Gastrocnemius medialis (tissue), 4 donors: ENCODE measurements at regions of chr11 and their contacts with region 1.

Region 1: DNA sequence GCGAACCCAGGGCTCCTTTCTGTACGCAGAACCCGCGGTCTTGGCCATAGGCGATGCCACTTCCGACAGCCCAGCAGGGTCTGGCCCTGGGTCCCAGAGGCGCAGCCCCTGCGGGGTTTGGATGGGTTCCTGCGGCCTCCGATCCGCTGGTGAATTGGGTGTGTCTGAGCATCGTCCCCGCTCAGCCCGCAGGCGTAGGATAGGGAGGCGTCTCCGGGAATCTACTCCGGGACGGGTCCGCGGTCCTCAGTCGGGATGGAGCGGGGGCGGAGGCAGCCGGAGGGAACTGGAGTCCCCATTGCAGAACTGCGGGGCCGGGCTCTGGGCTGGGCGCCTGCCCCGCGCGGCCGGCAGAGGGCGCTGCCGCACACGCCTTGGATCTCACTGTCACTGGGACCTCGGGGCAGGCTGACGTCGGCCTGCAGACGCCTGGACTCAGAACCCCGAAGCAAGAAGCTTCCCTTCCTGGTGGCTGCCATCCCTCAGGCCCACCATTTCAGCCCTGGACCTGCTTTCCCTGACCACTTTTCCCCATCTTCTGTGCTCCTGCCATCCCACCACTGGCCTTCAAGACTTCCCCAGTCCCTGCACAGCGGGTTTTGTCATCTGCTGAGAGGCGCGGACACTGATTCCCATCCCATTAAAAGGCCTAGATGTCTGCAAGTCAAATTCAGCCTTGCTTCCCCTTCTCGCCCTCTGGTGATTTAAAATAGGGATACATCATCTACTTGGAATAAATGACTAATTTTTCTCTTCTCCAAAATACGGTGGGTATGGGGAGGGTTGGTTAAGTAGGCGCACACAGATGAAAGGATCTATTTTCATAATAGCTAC is 38.3 kb upstream of the CREB3L1 start:
- DNase-seq: peak; percentile 48 to 71
- ATAC-seq: peak; percentile 69 to 73
- H3K4me3 ChIP-seq: peak overlapping the region; percentile 39 to 65 (median 56)
- H3K27ac ChIP-seq: peak overlapping the region; percentile 1 to 71 (median 68)
- H3K4me1 ChIP-seq: peaks cover 10 to 22% of the 10 kb centered on the region in 2 donors
- H3K27me3 ChIP-seq: peaks cover 0 to 18% (median 6%) of the 10 kb centered on the region in 3 donors
- CTCF ChIP-seq: peak; percentile 95 to 100 (median 99)
- POLR2A ChIP-seq: no peak

Region 2: DNA sequence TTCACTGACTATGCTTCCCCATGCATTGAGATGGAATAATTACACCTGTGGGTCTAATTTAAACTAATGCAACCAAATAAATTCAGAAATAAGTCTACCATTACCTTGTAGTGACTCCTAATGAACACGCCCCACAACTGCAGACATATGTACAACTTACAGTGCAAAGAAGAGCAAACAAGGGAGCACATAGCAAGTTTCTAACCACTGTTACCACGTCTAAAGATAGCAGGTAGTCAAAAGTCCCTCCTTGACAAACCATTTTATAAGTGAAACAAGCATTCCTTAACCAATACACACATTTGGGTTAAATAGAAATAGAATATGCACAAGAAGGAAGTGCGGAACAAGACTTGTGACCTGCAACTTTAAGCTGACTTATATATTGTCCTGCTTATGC is 138.5 kb before region 1 on chr11:
- in situ Hi-C with region 1: no loop called
- intact Hi-C with region 1: no loop called
- DNase-seq: no peak
- ATAC-seq: no peak
- H3K4me3 ChIP-seq: no peak overlapping the region
- H3K27ac ChIP-seq: no peak overlapping the region
- H3K4me1 ChIP-seq: peaks cover 50 to 60% of the 10 kb centered on the region in 2 donors
- H3K27me3 ChIP-seq: no peaks in the 10 kb centered on the region
- CTCF ChIP-seq: no peak
- POLR2A ChIP-seq: no peak

Region 3: DNA sequence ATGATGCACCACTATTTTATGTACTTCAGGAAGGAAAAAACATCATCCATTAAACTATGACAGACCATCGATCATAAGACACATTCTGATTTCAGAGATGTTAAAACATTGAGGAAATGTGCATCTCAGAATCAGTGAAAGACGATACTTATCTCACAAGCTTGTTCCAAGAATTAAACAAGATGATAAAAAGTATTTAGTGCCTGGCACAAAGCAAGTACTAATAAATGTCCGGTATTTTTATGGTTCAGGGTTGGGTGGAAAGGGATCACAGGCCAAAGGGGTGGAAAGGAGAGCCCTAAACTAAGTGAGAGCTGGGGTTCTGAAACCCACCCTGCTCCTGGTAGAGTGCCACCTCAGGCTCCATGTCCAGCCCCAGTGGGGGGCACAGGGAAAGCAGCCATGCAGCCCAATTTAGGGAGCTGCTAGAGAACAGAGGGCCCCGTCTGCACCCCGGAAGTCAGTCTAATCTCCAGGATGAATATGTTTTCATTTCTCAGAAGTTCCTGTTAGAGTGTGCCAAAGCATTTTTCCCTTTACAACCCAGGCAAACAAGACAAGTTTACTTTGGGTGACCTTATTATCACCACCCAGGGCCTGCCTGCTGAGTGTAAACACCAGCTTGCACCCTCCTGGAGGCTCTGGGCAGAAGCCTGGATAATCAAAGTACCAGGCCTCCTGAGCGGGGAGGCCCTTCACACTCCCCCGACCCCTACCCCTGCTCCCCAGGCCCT is 34.5 kb after region 1 on chr11:
- in situ Hi-C with region 1: no loop called
- intact Hi-C with region 1: loop called (anchors 2 kb)
- DNase-seq: no peak
- ATAC-seq: no peak
- H3K4me3 ChIP-seq: no peak overlapping the region
- H3K27ac ChIP-seq: peak overlapping the region; percentile 61 to 72 (median 66)
- H3K4me1 ChIP-seq: peaks cover 20 to 24% of the 10 kb centered on the region in 2 donors
- H3K27me3 ChIP-seq: peaks cover 12 to 30% (median 19%) of the 10 kb centered on the region in 3 donors
- CTCF ChIP-seq: no peak
- POLR2A ChIP-seq: no peak

Region 4: GRCh38 chr11:46295312-46296058 is 56.3 kb after region 1 on chr11:
- in situ Hi-C with region 1: no loop called
- intact Hi-C with region 1: no loop called
- DNase-seq: peak; percentile 60 to 66
- ATAC-seq: peak; percentile 75 to 85
- H3K4me3 ChIP-seq: peak overlapping the region; percentile 63 to 72 (median 64)
- H3K27ac ChIP-seq: peak overlapping the region in 1 of 4 donors; percentile 44
- H3K4me1 ChIP-seq: peaks cover 12 to 13% of the 10 kb centered on the region in 2 donors
- H3K27me3 ChIP-seq: no peaks in the 10 kb centered on the region
- CTCF ChIP-seq: no peak
- POLR2A ChIP-seq: no peak

Region 5: DNA sequence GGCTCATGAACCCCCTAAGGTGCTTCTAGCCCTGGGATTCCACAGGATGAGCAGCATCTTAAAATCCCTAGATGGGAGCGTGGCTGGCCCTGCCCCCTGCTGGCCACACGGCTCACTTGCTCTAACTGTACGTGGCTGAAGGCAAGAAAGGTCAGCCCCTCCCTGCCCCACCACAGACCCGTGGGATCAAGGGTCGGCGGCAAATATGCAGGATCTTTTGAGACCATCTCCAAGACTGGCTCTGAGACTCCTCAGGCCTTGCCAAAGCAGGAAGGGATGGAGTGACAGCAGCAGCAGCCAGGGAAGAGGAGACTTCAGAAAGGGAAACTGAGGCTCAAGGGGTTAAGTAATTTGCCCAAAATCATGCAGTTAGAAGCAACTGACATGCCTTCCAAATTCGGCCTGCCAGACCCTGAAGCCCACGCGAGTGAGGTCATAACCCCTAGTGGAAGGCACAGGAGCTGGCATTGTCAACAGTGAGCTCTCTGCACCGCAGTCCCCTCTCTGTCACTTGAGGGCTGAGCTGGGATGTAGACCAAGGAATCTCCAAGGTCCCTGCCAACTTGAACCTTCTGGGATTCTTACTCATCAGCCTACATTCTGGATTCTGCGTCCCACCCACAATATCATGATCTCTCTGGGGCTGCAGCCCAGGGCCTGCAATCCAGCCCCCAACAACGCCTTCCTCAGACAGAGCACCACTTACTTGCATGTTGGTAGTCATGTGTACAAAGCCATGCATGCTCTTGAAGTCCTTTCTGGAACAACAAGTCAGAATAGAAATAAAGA is 69.6 kb after region 1 on chr11:
- in situ Hi-C with region 1: loop called (anchors 5 kb)
- intact Hi-C with region 1: loop called (anchors 1 kb)
- DNase-seq: peak; percentile 43 to 66
- ATAC-seq: peak; percentile 80 to 81
- H3K4me3 ChIP-seq: no peak overlapping the region
- H3K27ac ChIP-seq: no peak overlapping the region
- H3K4me1 ChIP-seq: no peaks in the 10 kb centered on the region
- H3K27me3 ChIP-seq: no peaks in the 10 kb centered on the region
- CTCF ChIP-seq: peak; percentile 85 to 92 (median 90)
- POLR2A ChIP-seq: no peak

Region 6: DNA sequence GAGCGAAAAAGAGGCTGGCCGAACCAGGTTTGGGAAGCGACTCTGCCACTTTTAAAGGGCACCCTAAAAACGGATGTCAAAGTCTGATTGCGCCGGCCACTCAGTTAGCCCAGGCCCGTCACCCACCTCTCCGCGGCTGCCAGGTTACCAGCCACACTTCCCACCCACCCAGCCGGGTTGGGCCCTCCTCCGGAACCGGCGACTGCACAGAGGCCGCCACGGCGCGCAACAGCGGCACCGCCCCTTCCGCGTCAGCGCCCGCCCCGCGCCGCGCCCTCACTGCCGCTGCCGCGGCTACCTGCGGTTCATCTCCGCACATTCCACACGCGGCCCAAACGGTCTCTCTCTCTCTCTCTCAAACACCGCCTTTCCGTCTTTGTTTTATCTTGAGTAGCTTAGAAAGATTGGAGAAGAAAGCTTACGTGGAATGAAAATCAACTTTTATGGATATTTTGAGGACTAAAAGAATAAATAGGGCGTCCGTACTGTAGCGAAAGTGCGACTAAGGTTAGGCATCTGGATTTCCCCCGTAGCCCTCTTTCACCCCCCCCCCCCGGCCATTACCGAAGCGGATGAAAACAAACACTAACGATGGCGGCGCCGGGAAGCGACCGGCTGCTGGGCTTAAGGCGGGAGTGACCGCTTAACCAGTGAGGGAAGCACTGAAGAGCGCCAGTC is 378.0 kb after region 1 on chr11 and contains the starts of genes ATG13 and HARBI1:
- in situ Hi-C with region 1: no loop called
- intact Hi-C with region 1: no loop called
- DNase-seq: peak; percentile 68 to 77
- ATAC-seq: peak; percentile 92 to 94
- H3K4me3 ChIP-seq: peak within 1 kb of the TSS; percentile 81 to 100 (median 93)
- H3K27ac ChIP-seq: peak within 1 kb of the TSS; percentile 92 to 99 (median 96)
- H3K4me1 ChIP-seq: peaks cover 23 to 25% of the 10 kb centered on the region in 2 donors
- H3K27me3 ChIP-seq: no peaks in the 10 kb centered on the region
- CTCF ChIP-seq: no peak
- POLR2A ChIP-seq: peak; percentile 80 to 85
- total RNA-seq, gene ATG13: 33.4 to 76.0 (median 67.0) TPM
- total RNA-seq, gene HARBI1: 1.2 to 6.9 (median 3.3) TPM